Head of caudate nucleus (tissue), 42 donors: ENCODE measurements at regions of chr2 and their contacts with region 1.

Region 1: GRCh38 chr2:125745514-125745913 is 910.4 kb upstream of the GYPC start:
- DNase-seq: peak in 39 of 42 donors; percentile 22 to 87 (median 58)

Region 2: DNA sequence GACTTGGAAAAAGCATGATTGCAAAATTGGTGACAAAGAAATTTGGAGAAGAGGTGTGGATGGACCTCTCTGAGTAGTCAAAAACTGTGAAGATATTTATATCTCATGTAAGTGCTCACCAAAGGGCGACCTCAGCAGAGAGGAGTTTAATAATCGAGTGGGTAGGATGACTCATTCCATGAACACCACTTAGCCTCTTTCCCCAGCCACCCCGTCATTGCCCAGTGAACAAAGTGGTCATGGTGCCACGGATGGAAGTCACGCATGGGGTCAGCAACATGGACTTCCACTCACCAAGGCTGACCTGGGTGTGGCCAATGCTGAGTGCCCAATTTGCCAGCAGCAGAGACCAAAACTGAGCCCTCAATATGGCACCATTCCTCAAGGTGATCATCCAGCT is 86.9 kb before region 1 on chr2:
- intact Hi-C with region 1: no loop called
- DNase-seq: no peak

Region 3: DNA sequence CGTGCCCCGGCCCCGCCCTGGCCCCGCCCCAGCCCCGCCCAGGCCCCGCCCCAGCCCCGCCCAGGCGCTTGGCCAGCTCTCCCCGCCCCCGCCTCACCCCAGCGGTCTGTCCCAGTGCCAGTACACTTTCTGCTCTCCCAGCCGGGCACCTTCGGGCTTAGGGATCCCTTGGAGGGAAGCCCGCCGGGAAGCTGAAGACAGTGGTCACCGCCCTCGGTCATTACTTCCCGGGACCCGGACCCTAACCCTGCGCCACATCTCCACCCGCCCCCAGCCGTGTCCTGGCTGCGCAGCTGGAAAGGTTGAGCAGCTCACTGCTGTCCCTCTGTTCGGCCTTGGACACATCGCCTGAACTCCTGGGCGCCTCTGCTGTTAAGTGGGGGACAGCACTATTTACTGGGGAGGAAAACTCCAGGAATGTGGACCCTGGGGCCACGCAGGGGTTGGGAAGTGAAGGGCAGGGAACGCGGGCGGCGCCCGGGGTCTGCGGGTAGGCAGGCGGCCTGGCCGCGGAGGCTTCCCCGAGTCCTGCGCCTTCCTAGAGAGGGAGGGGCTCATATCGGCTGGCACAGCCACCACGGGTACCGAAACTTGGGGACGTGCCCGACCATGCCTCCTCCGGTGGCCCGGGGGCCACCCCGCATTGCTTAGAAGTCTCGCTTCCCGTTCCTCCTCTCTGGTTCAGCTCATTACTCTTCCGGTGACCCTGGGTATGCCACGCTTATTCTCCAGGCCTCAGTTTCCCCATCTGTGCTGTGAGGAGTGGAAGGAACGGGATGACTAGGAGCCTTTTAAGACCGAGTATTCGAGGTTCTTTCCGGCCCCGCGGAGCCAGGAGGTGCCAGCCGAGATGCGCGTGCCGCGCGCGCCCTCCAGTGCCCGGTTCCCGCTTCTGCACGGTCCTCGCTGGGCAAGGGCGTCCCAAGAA is 1031.4 kb after region 1 on chr2:
- intact Hi-C with region 1: loop called (anchors 10 kb)
- DNase-seq: peak; percentile 60 to 96 (median 90)